ENCODE measurements at regions of chr1 and their contacts with region 1.

Region 1: GRCh38 chr1:185790194-185790735 is 56.1 kb downstream of the HMCN1 start:
- DNase-seq: no peak
- H3K4me3 ChIP-seq: no peak overlapping the region
- H3K27ac ChIP-seq: no peak overlapping the region
- H3K4me1 ChIP-seq: peaks cover 0 to 16% (median 0%) of the 10 kb centered on the region in 4 donors
- H3K27me3 ChIP-seq: no peaks in the 10 kb centered on the region
- CTCF ChIP-seq: no peak

Region 2: GRCh38 chr1:185426848-185427247 is 363.4 kb before region 1 on chr1:
- intact Hi-C with region 1: loop called (anchors 5 kb)
- DNase-seq: peak; percentile 54 to 66
- H3K4me3 ChIP-seq: no peak overlapping the region
- H3K27ac ChIP-seq: no peak overlapping the region
- H3K4me1 ChIP-seq: peaks cover 0 to 10% (median 3%) of the 10 kb centered on the region in 4 donors
- H3K27me3 ChIP-seq: no peaks in the 10 kb centered on the region
- CTCF ChIP-seq: no peak

Measured in tibial artery (tissue), 4 donors.